ENCODE measurements at regions of chr3 and their contacts with region 1.

Region 1: DNA sequence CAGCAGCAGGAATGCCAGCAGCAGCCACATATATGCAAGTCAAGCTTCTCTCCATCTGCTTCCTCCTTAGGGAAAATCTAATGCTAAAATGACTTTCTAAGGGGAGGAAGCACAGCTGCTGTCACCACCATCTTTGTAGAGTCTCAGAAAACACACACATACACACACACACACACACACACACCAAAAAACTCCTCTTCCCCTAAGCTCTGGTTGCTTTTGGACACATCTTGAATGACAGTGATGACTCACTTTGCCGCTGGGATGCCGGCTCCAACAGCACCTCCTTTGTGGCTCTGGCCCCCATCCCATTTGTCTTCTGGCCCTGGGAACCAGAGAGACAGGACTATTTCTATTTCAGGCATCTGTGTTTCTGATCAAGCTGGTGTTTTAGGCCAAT is 124.8 kb upstream of the GOLIM4 start:
- DNase-seq: no peak
- ATAC-seq: no peak
- H3K4me3 Mint-ChIP-seq: no peak overlapping the region
- H3K27ac Mint-ChIP-seq: no peak overlapping the region
- H3K4me1 Mint-ChIP-seq: no peaks in the 10 kb centered on the region
- H3K27me3 Mint-ChIP-seq: peaks cover 5% of the 10 kb centered on the region

Region 2: DNA sequence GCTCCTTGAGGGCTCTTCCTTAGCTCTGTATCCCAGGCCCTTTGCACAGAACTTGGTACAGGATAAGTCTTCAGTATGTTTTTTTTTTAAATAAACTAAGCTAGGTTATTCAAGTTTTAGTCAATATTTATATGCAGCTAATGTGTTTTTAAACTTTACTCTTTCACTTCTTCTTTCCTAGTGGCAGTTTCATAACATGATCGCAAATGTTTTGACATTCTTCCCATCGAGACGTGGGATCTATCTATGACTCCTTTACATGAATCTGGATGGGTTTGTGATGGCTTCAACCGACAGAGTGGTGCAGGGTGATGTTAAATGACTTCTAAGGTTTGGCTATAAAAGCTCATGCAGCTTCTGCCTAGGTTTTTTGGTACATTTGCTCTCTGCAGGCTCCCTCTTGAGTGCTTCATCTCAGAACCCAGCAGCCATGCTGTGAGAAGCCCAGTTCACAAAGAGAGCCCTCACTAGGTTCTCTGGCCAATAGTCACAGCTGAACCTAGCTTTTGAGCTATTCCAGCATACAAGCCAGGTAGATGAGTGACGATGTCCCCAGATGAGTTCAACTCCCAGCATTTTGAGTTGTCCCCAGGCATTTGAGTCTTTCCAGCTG is 1456.5 kb after region 1 on chr3:
- CTCF ChIA-PET with region 1: no interaction called
- POLR2A ChIA-PET with region 1: no interaction called
- intact Hi-C with region 1: loop called in 1 of 2 experiments (anchors 10 kb)
- DNase-seq: no peak
- ATAC-seq: no peak
- H3K4me3 Mint-ChIP-seq: no peak overlapping the region
- H3K27ac Mint-ChIP-seq: no peak overlapping the region
- H3K4me1 Mint-ChIP-seq: no peaks in the 10 kb centered on the region
- H3K27me3 Mint-ChIP-seq: peaks cover 29% of the 10 kb centered on the region